Caco-2 (cell line): ENCODE measurements at regions of chr6 and their contacts with region 1.

Region 1: DNA sequence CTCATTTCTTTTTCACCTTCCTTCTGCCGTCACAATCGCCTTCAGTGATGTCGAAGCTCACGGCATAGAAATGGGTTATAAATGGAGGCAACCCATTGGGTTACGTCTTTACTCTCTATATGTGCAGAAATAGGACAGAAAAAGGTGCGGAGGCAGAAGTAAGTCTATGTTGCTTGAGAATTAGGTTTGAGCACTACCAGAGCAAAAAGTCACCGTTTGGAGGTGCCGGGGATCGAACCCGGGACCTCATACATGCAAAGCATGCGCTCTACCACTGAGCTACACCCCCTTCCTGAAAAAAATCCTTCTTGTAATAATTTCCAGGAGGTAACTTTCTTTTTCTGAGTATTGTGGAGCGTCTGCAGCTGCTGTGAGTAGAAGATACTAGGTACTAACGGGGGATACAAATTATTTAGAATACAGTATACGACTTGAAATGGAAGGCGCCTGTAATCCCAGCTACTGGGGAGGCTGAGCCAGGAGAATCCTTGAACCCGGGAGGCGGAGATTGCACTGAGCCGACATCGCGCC is 134.2 kb downstream of the TRIM27 start:
- DNase-seq: peak; percentile 45 to 71
- H3K4me3 ChIP-seq: peak overlapping the region; percentile 34
- H3K4me3 Mint-ChIP-seq: peak overlapping the region; percentile 82
- H3K27ac Mint-ChIP-seq: peak overlapping the region; percentile 92
- H3K4me1 ChIP-seq: peaks cover 4% of the 10 kb centered on the region; the same call in 1 of the 2 replicates
- H3K4me1 Mint-ChIP-seq: peaks cover 27% of the 10 kb centered on the region
- H3K27me3 ChIP-seq: no peaks in the 10 kb centered on the region
- H3K27me3 Mint-ChIP-seq: peaks cover 3% of the 10 kb centered on the region
- CTCF ChIP-seq: no peak

Region 2: DNA sequence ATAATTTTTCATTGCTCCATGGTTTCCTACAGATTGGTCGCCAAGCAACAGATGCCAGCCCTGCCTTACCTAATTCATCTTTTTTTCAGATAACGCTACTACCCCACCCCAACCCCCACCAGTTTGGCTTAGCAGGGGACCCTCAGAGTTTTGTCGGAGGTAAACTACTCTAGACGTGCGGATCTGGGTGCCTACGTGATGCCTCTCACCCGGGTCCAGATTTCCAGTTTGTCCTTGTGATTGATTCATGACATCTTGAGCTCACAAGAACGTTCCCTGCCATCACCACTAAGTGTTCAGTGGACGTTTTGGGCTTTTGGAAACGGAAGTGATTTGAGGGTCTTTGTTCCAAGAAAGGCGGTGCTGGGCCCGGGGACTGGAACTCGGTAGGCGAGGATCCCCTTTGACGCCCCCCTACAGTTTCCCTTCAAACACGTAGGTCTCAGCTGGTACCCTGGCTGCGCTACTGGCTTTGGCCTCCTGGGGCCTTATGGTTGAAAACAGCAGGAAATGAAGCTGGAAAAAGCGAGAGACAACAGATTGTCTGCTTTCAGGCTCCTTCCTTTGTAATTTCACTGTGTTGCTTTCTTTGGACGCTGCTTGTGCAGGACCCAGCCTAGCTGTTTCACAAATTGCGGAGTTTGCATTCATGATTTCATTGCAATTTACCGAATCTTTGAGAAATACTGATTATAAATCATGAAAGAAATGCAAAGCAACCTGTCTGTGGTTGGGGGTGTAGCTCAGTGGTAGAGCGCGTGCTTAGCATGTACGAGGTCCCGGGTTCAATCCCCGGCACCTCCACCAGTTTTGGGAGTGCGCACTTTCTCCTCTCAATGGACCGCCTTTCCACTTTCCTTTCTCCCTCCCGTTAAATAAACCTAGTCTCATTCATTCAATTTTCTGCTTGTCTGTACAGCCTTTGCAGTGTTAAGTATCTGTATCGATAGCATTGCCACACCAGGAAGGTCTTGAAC is 182.9 kb before region 1 on chr6:
- CTCF ChIA-PET with region 1: no interaction called
- POLR2A ChIA-PET with region 1: no interaction called
- intact Hi-C with region 1: loop called (anchors 1 kb)
- DNase-seq: peak; percentile 75 to 77
- H3K4me3 ChIP-seq: peak overlapping the region; percentile 36
- H3K4me3 Mint-ChIP-seq: peak overlapping the region; percentile 80
- H3K27ac Mint-ChIP-seq: peak overlapping the region; percentile 69
- H3K4me1 ChIP-seq: peaks cover 6% of the 10 kb centered on the region
- H3K4me1 Mint-ChIP-seq: peaks cover 7% of the 10 kb centered on the region
- H3K27me3 ChIP-seq: no peaks in the 10 kb centered on the region
- H3K27me3 Mint-ChIP-seq: no peaks in the 10 kb centered on the region
- CTCF ChIP-seq: peak; percentile 55 to 56

Region 3: GRCh38 chr6:28657769-28658465 is 131.7 kb before region 1 on chr6:
- CTCF ChIA-PET with region 1: no interaction called
- POLR2A ChIA-PET with region 1: no interaction called
- intact Hi-C with region 1: no loop called
- DNase-seq: peak; percentile 43 to 67
- H3K4me3 ChIP-seq: peak overlapping the region; percentile 41
- H3K4me3 Mint-ChIP-seq: peak overlapping the region; percentile 76
- H3K27ac Mint-ChIP-seq: peak overlapping the region; percentile 81
- H3K4me1 ChIP-seq: peaks cover 15% of the 10 kb centered on the region; the same call in 1 of the 2 replicates
- H3K4me1 Mint-ChIP-seq: peaks cover 6% of the 10 kb centered on the region
- H3K27me3 ChIP-seq: no peaks in the 10 kb centered on the region
- H3K27me3 Mint-ChIP-seq: no peaks in the 10 kb centered on the region
- CTCF ChIP-seq: no peak

Region 4: DNA sequence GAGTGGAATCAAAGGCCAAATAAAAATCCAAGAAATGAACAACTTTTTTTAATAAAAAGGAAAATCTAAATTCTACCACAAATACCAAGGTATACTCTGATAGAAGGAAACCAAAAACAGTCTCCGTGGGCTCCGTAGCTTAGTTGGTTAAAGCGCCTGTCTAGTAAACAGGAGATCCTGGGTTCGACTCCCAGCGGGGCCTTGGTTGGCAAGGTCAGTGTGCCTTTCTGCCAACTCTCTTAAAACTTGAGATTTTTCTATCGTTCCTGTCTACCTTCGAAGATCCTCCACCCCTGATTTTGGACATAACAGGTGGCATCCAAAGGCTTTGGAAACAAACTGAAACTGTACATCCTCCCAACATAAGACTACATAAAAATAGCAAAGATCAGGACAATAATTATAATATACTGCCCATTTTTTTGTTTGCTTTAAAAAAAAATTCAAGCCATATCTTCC is 63.7 kb before region 1 on chr6:
- CTCF ChIA-PET with region 1: interaction called, 8 read pairs
- POLR2A ChIA-PET with region 1: no interaction called
- intact Hi-C with region 1: loop called (anchors 5 kb)
- DNase-seq: no peak
- H3K4me3 ChIP-seq: no peak overlapping the region
- H3K4me3 Mint-ChIP-seq: no peak overlapping the region
- H3K27ac Mint-ChIP-seq: no peak overlapping the region
- H3K4me1 ChIP-seq: 0 out of 2 replicates have a peak, but pooled peaks cover 3% of the 10 kb centered on the region
- H3K4me1 Mint-ChIP-seq: peaks cover 20% of the 10 kb centered on the region
- H3K27me3 ChIP-seq: no peaks in the 10 kb centered on the region
- H3K27me3 Mint-ChIP-seq: peaks cover 4% of the 10 kb centered on the region
- CTCF ChIP-seq: no peak

Region 5: DNA sequence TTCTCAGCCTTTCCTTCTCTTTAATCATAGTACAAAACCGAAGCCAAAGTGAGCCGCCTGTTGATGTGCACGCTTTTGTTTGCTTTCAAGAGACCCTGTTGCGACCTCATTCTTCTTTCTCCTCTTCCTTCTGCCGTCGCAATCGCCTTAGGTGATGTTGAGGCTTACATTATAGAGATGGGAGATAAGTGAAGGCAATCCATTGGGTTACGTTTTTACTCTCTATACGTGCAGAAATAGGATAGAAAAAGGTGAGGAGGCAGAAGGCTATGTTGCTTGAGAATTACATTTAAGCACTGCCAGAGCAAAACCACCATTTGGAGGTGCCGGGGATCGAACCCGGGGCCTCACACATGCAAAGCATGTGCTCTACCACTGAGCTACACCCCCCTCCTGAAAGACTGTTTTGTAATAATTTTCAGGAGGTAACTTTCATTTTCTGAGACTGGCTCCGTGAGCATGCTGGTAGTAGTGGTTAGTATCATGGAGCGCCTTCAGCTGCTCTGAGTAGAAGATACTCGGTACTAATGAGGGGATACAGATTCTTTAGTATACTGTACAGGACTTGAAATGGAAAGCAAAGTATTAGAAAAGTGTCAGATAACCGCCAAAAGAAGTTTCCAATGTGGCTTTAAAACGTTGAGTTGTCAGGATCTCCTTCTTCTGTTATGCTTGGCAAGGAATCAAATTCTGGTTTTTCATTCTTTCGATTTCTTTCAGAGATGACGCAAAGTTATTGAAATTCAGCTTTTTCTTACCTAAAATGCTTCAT is 31.4 kb before region 1 on chr6:
- CTCF ChIA-PET with region 1: no interaction called
- POLR2A ChIA-PET with region 1: no interaction called
- intact Hi-C with region 1: loop called (anchors 1 kb)
- DNase-seq: peak; percentile 65 to 81
- H3K4me3 ChIP-seq: peak overlapping the region; percentile 33
- H3K4me3 Mint-ChIP-seq: peak overlapping the region; percentile 88
- H3K27ac Mint-ChIP-seq: peak overlapping the region; percentile 79
- H3K4me1 ChIP-seq: no peaks in the 10 kb centered on the region
- H3K4me1 Mint-ChIP-seq: peaks cover 24% of the 10 kb centered on the region
- H3K27me3 ChIP-seq: no peaks in the 10 kb centered on the region
- H3K27me3 Mint-ChIP-seq: no peaks in the 10 kb centered on the region
- CTCF ChIP-seq: no peak

Region 6: GRCh38 chr6:28863604-28864320 is 74.1 kb after region 1 on chr6:
- CTCF ChIA-PET with region 1: no interaction called
- POLR2A ChIA-PET with region 1: no interaction called
- intact Hi-C with region 1: no loop called
- DNase-seq: peak; percentile 85 to 87
- H3K4me3 ChIP-seq: peak overlapping the region; percentile 81
- H3K4me3 Mint-ChIP-seq: peak overlapping the region; percentile 79
- H3K27ac Mint-ChIP-seq: peak overlapping the region; percentile 96
- H3K4me1 ChIP-seq: peaks cover 11% of the 10 kb centered on the region
- H3K4me1 Mint-ChIP-seq: peaks cover 20% of the 10 kb centered on the region
- H3K27me3 ChIP-seq: no peaks in the 10 kb centered on the region
- H3K27me3 Mint-ChIP-seq: no peaks in the 10 kb centered on the region
- CTCF ChIP-seq: no peak